Prostate gland (tissue), 2 donors: ENCODE measurements at regions of chr16 and their contacts with region 1.

Region 1: GRCh38 chr16:75464130-75464918 is at the start of gene TMEM170A:
- DNase-seq: peak; percentile 99
- H3K4me3 ChIP-seq: peak within 1 kb of the TSS; percentile 85 to 92
- H3K27ac ChIP-seq: peak within 1 kb of the TSS; percentile 96 to 98
- H3K4me1 ChIP-seq: no peaks in the 10 kb centered on the region
- H3K27me3 ChIP-seq: no peaks in the 10 kb centered on the region
- CTCF ChIP-seq: peak; percentile 100
- POLR2A ChIP-seq: peak; percentile 95
- total RNA-seq, gene TMEM170A: 21.5 to 35.9 TPM

Region 2: GRCh38 chr16:75432828-75433731 is 31.2 kb before region 1 on chr16 and contains the start of gene CFDP1:
- intact Hi-C with region 1: loop called (anchors 2 kb)
- DNase-seq: peak; percentile 96
- H3K4me3 ChIP-seq: peak within 1 kb of the TSS; percentile 93 to 98
- H3K27ac ChIP-seq: peak within 1 kb of the TSS; percentile 95 to 98
- H3K4me1 ChIP-seq: peaks cover 4% of the 10 kb centered on the region
- H3K27me3 ChIP-seq: no peaks in the 10 kb centered on the region
- CTCF ChIP-seq: peak in 2 of 4 experiments; percentile 26 to 36
- POLR2A ChIP-seq: peak; percentile 80
- total RNA-seq, gene CFDP1: 67.9 to 101 TPM

Region 3: DNA sequence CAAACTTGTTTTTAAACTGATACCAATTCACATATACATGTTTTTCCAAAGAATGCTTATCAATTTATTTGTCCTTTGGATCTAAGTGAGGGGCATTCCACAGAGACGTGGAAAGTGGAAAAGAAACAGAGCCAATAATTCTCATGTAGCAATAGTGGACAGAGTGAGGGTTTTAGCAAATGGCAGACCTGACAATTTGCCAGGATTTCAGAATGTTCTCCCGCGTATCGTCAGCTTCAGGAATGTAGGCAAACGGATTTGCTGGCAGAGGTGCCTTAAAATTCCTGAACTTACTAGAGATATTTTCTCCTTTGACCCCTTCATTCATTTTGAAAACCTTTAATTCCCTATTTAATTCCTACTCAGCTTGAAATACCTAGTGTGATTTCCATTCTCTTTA is 455.3 kb after region 1 on chr16:
- intact Hi-C with region 1: no loop called
- DNase-seq: no peak
- H3K4me3 ChIP-seq: no peak overlapping the region
- H3K27ac ChIP-seq: no peak overlapping the region
- H3K4me1 ChIP-seq: no peaks in the 10 kb centered on the region
- H3K27me3 ChIP-seq: no peaks in the 10 kb centered on the region
- CTCF ChIP-seq: no peak
- POLR2A ChIP-seq: no peak